Heart right ventricle (tissue), 16 donors: ENCODE measurements at regions of chr5 and their contacts with region 1.

Region 1: GRCh38 chr5:36934740-36935356 is 58.3 kb downstream of the NIPBL start:
- DNase-seq: no peak
- ATAC-seq: no peak
- H3K4me3 ChIP-seq: no peak overlapping the region
- H3K27ac ChIP-seq: no peak overlapping the region
- H3K4me1 ChIP-seq: peaks cover 0 to 78% (median 55%) of the 10 kb centered on the region in 9 donors
- H3K27me3 ChIP-seq: no peaks in the 10 kb centered on the region
- CTCF ChIP-seq: no peak

Region 2: GRCh38 chr5:36882250-36882649 is 52.6 kb before region 1 on chr5:
- intact Hi-C with region 1: loop called in 6 of 10 experiments (anchors 2 to 10 kb)
- DNase-seq: no peak
- ATAC-seq: no peak
- H3K4me3 ChIP-seq: no peak overlapping the region
- H3K27ac ChIP-seq: no peak overlapping the region
- H3K4me1 ChIP-seq: peaks cover 0 to 91% (median 63%) of the 10 kb centered on the region in 9 donors
- H3K27me3 ChIP-seq: no peaks in the 10 kb centered on the region
- CTCF ChIP-seq: no peak

Region 3: GRCh38 chr5:36897616-36898015 is 37.2 kb before region 1 on chr5:
- intact Hi-C with region 1: loop called in 1 of 10 experiments (anchors 5 kb)
- DNase-seq: no peak
- ATAC-seq: peak in 2 of 8 donors; percentile 31 to 39
- H3K4me3 ChIP-seq: no peak overlapping the region
- H3K27ac ChIP-seq: no peak overlapping the region
- H3K4me1 ChIP-seq: peaks cover 0 to 68% (median 51%) of the 10 kb centered on the region in 9 donors
- H3K27me3 ChIP-seq: no peaks in the 10 kb centered on the region
- CTCF ChIP-seq: no peak

Region 4: GRCh38 chr5:36982146-36982545 is 47.3 kb after region 1 on chr5:
- intact Hi-C with region 1: no loop called
- DNase-seq: no peak
- ATAC-seq: no peak
- H3K4me3 ChIP-seq: no peak overlapping the region
- H3K27ac ChIP-seq: no peak overlapping the region
- H3K4me1 ChIP-seq: no peaks in the 10 kb centered on the region
- H3K27me3 ChIP-seq: no peaks in the 10 kb centered on the region
- CTCF ChIP-seq: no peak